ENCODE measurements at regions of chr15 and their contacts with region 1.

Region 1: DNA sequence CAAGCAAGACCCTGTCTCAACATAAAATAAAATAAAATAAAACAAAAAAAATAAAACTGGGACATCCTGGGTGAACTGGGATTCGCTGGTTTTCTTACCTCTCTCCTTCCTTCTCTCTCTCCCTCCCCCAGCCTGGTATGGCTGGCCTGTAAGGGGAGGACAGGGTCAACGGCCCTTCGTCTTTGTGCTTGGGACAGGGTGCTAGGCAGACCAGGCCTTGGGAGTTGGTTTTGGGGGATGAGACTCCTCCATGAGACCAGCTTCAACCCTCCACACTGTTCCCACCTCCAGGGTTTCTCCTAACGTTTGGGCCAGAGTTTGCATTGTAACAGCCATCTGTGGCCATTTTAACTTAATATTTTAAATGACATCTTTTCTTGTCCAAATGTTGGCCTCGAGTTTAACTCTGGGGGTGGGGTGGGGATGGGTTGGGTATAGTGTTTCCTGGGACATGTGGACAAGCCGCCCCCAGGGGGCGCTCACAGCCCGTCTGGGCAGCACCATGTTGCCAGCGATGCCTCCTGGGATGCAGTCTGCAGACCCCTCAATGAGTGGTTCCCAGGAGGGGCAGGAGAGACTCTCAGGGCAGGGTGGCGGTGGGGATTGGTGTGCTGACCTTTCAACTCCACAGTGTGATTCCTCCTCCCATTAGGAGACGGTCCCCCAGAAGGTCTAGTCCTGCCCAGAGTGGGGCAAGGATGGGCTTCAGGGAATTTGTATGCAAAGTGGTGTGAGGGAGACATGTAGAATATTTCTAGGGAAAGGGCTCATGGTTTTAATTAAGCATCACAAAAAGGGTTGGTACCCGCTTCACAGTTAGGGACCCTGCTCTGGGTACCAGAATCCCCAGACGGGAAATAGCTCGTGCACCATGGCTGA is 37.7 kb upstream of the LCTL start:
- DNase-seq: peak in 6 of 10 donors; percentile 25 to 86 (median 41)

Region 2: GRCh38 chr15:66221126-66221525 is 382.4 kb before region 1 on chr15:
- intact Hi-C with region 1: no loop called
- DNase-seq: peak in 2 of 10 donors; percentile 63 to 75

Region 3: DNA sequence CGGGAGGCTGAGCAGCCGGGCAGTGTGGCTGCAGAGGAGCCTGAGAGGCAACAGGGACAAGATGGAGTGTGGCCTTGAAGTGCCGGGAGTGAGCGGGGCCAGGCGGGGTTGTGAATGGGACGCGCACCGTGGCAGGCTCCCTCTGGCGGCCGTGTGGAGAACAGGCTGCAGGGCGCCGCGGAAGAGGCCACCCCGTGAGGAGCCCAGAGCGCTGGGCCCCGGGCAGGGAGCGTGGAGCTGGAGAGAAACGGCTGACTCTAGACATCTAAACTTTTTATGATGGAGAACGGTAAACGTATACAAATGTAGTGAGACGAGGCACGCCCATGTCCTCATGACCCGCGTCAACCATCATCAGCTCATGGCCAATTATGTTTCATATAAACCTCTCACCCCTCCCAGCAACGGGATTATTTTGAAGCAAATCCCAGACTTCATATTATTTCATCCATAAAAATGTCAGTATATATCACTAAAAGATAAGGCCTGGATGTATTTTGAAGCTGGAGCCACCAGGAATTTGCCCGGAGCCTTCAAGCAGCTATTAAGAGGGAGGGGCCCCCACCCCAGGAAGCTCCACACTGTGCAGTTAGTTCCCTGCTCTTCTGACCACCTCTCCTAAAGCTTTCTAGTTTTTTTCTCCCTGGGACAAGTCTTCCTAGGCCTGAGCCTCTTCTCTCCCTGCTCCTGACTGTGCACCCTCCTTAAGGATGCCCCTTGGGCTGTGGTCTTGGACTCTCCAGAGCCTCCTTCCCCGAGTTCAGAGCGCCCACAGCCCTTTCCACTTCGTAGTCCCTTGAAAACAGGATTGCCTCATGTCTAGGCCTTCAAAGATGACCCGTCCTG is 247.9 kb after region 1 on chr15:
- intact Hi-C with region 1: loop called (anchors 5 kb)
- DNase-seq: peak in 9 of 10 donors; percentile 46 to 93 (median 68)

Measured in posterior cingulate gyrus (tissue), 11 donors.